Activated CD8-positive, alpha-beta memory T cell treated with anti-CD3 and anti-CD28 coated beads, Interleukin-2, amount 10 ng/mL, durations not matched to agents 7 days and 5 days (primary cell): ENCODE measurements at regions of chr10 and their contacts with region 1.

Region 1: GRCh38 chr10:6445501-6446316 is 134.4 kb downstream of the PRKCQ start:
- DNase-seq: peak; percentile 78
- ATAC-seq: peak; percentile 66
- H3K4me3 Mint-ChIP-seq: no peak overlapping the region
- H3K27ac Mint-ChIP-seq: peak overlapping the region; percentile 58
- H3K4me1 Mint-ChIP-seq: peaks cover 39% of the 10 kb centered on the region
- H3K27me3 Mint-ChIP-seq: no peaks in the 10 kb centered on the region

Region 2: DNA sequence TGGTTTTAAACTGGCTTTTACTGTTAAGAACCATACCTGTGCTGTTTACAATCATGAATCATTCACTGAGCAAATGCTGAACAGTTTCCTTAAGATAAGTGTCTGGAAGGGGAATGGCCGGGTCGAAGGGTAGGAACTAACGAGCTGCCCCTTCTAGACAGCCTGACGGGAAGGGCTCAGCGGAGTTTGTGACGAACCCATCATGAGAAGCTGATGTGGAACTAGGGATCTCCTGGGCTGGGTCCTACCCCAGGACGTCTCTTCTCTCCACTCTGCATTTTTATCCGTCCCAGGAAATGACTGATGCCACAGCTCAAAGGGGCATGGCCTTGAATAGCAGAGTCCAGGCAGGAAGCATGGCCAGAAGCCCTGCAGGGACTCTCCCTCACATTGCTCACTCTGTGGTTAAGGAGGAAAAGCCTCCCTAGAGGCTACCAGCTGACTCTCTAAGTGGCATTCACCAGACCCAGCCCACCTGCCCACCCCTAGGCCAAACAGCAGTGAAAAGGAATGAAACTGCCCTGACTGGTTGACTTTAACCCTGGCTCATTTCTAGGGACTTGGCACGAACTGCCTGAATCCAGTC is 131.0 kb before region 1 on chr10:
- CTCF ChIA-PET with region 1: no interaction called
- DNase-seq: no peak
- ATAC-seq: no peak
- H3K4me3 Mint-ChIP-seq: no peak overlapping the region
- H3K27ac Mint-ChIP-seq: no peak overlapping the region
- H3K4me1 Mint-ChIP-seq: peaks cover 10% of the 10 kb centered on the region
- H3K27me3 Mint-ChIP-seq: no peaks in the 10 kb centered on the region

Region 3: DNA sequence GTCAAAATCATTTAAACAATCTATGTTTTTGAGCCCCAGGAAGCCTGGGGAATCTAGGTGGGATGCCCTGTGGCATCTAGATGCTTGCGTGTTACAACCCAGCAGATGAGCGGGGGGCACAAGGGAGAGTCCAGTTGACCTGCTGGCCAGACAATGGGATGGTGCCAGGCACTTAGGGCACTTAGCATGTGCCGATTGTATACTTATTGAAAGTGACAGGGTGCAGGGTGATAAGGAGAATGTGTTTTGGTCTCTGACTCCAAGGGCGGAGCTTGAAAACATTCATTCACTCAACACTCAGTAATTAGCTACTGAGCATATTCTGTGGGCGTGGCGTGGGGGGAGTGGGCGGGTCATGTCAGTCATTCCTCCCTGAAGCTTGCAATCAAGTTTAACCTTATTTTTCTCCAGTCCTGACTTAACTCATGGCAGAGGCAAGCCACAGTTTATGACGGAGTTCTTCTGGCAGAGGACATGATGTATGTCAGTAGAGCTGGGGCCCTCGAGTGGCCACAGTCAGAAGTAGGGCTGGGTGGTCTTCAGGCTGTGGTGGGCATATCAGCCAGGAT is 19.2 kb after region 1 on chr10:
- CTCF ChIA-PET with region 1: interaction called, 16 read pairs
- DNase-seq: no peak
- ATAC-seq: no peak
- H3K4me3 Mint-ChIP-seq: no peak overlapping the region
- H3K27ac Mint-ChIP-seq: no peak overlapping the region
- H3K4me1 Mint-ChIP-seq: peaks cover 26% of the 10 kb centered on the region
- H3K27me3 Mint-ChIP-seq: no peaks in the 10 kb centered on the region

Region 4: DNA sequence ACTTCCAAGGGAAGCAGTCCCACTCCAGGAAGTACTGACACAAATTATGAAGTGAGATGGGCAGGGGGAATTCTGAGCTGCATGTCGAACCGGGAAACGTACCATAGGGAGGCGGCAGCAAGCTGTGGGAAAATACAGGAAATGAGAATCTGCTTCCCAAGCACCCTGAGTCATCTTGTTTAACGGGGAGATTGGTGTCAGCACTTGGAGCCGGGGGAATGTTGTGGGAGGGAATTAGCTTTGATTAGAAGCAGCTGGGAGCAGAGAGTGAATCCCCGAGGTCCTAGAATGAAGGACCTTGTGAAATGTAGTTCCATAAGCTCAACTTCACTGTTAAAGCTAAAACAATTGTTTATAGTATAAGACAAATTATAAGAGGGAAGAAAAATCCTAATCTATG is 275.8 kb after region 1 on chr10:
- CTCF ChIA-PET with region 1: no interaction called
- DNase-seq: no peak
- ATAC-seq: no peak
- H3K4me3 Mint-ChIP-seq: no peak overlapping the region
- H3K27ac Mint-ChIP-seq: no peak overlapping the region
- H3K4me1 Mint-ChIP-seq: peaks cover 3% of the 10 kb centered on the region
- H3K27me3 Mint-ChIP-seq: peaks cover 67% of the 10 kb centered on the region